ENCODE measurements at regions of chr19 and their contacts with region 1.

Region 1: GRCh38 chr19:45523642-45524256 is 16.5 kb downstream of the VASP start:
- DNase-seq: peak; percentile 54 to 85 (median 83)
- ATAC-seq: peak; percentile 100
- H3K4me3 ChIP-seq: no peak overlapping the region
- H3K4me3 Mint-ChIP-seq: no peak overlapping the region
- H3K27ac ChIP-seq: no peak overlapping the region
- H3K27ac Mint-ChIP-seq: peak overlapping the region in 8 of 9 donors; percentile 26 to 88 (median 65)
- H3K4me1 ChIP-seq: no peaks in the 10 kb centered on the region
- H3K4me1 Mint-ChIP-seq: peaks cover 11 to 24% (median 17%) of the 10 kb centered on the region in 7 donors
- H3K27me3 ChIP-seq: no peaks in the 10 kb centered on the region
- H3K27me3 Mint-ChIP-seq: no peaks in the 10 kb centered on the region

Region 2: GRCh38 chr19:45496349-45496953 is 27.3 kb before region 1 on chr19:
- CTCF ChIA-PET with region 1: interaction called, 3 read pairs
- POLR2A ChIA-PET with region 1: interaction called, 4 read pairs
- intact Hi-C with region 1: loop called in 1 of 2 experiments (anchors 1 kb)
- DNase-seq: peak in 7 of 9 donors; percentile 44 to 75 (median 55)
- ATAC-seq: peak; percentile 33
- H3K4me3 ChIP-seq: peak overlapping the region; percentile 65
- H3K4me3 Mint-ChIP-seq: peak overlapping the region; percentile 72 to 97 (median 77)
- H3K27ac ChIP-seq: no peak overlapping the region
- H3K27ac Mint-ChIP-seq: peak overlapping the region in 4 of 9 donors; percentile 12 to 87 (median 48)
- H3K4me1 ChIP-seq: peaks cover 28 to 38% of the 10 kb centered on the region in 2 donors
- H3K4me1 Mint-ChIP-seq: peaks cover 28 to 52% (median 48%) of the 10 kb centered on the region in 7 donors
- H3K27me3 ChIP-seq: no peaks in the 10 kb centered on the region
- H3K27me3 Mint-ChIP-seq: peaks cover 12 to 37% (median 19%) of the 10 kb centered on the region in 5 donors

Region 3: GRCh38 chr19:45506246-45506990 is 17.3 kb before region 1 on chr19:
- CTCF ChIA-PET with region 1: no interaction called
- POLR2A ChIA-PET with region 1: interaction called, 4 read pairs
- intact Hi-C with region 1: loop called (anchors 1 kb)
- DNase-seq: peak; percentile 95 to 99 (median 98)
- ATAC-seq: peak; percentile 88
- H3K4me3 ChIP-seq: peak overlapping the region; percentile 99
- H3K4me3 Mint-ChIP-seq: peak overlapping the region; percentile 91 to 96 (median 94)
- H3K27ac ChIP-seq: peak overlapping the region; percentile 87
- H3K27ac Mint-ChIP-seq: peak overlapping the region; percentile 91 to 98 (median 97)
- H3K4me1 ChIP-seq: peaks cover 14 to 20% of the 10 kb centered on the region in 2 donors
- H3K4me1 Mint-ChIP-seq: peaks cover 29 to 46% (median 34%) of the 10 kb centered on the region in 7 donors
- H3K27me3 ChIP-seq: no peaks in the 10 kb centered on the region
- H3K27me3 Mint-ChIP-seq: no peaks in the 10 kb centered on the region

Region 4: DNA sequence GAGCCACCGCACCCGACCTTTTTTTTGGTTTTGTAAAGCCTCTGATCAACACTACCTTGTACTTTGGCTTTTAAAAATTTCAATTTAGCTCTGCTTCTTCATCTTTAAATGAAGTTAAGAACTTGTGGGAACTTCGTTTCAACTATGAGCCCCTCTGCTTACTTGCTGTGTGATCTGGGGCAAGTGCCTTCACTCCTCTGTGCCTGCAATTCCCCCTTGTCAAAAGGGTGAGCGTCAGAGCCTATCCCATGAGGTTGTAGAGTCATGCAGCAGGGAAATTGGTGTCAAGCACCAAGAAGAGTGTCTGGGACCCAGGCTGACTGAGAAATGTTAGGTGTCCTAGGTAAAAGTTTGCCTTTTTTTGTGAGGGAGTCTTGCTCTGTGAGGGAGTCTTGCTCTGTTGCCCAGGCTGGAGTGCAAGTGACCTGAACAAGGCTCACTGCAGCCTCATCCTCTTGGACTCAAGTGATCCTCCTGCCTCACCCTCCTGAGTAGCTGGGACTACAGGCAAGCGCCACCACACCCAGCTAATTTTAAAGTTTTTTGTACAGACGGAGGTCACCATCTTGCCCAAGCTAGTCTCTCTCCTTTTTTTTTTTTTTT is 10.8 kb before region 1 on chr19:
- CTCF ChIA-PET with region 1: no interaction called
- POLR2A ChIA-PET with region 1: interaction called, 4 read pairs
- intact Hi-C with region 1: loop called in 1 of 2 experiments (anchors 1 kb)
- DNase-seq: no peak
- ATAC-seq: no peak
- H3K4me3 ChIP-seq: no peak overlapping the region
- H3K4me3 Mint-ChIP-seq: peak overlapping the region in 7 of 10 donors; percentile 17 to 62 (median 45)
- H3K27ac ChIP-seq: no peak overlapping the region
- H3K27ac Mint-ChIP-seq: peak overlapping the region; percentile 43 to 96 (median 71)
- H3K4me1 ChIP-seq: peaks cover 29 to 48% of the 10 kb centered on the region in 2 donors
- H3K4me1 Mint-ChIP-seq: peaks cover 45 to 75% (median 60%) of the 10 kb centered on the region in 7 donors
- H3K27me3 ChIP-seq: no peaks in the 10 kb centered on the region
- H3K27me3 Mint-ChIP-seq: no peaks in the 10 kb centered on the region

Region 5: DNA sequence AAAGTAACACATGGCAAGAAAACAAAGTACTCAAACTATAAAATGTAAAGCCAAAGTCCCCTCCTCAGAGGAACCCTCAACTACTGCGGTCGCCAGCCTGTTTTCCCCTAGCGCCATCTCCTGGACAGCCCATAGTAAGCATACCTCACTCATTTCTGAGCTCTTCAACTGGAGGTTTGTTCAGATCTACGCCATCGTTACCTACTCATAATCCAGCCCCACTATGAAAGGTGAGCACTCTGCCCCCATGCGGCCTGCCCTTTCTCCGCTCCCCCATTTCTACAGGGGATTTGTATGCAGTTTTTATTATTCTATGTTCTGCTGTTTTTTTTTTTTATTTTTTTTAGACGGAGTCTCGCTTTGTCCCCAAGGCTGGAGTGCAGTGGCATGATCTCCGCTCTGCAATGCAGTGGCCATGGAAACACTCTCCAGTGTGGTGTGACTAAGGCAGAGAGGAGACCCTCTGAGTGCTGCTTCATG is 34.7 kb after region 1 on chr19:
- CTCF ChIA-PET with region 1: interaction called, 7 read pairs
- POLR2A ChIA-PET with region 1: interaction called, 3 read pairs
- intact Hi-C with region 1: loop called (anchors 1 kb)
- DNase-seq: peak; percentile 37 to 85 (median 81)
- ATAC-seq: peak; percentile 99
- H3K4me3 ChIP-seq: no peak overlapping the region
- H3K4me3 Mint-ChIP-seq: peak overlapping the region in 3 of 10 donors; percentile 52 to 75 (median 59)
- H3K27ac ChIP-seq: peak overlapping the region; percentile 18
- H3K27ac Mint-ChIP-seq: peak overlapping the region in 8 of 9 donors; percentile 14 to 86 (median 66)
- H3K4me1 ChIP-seq: peaks cover 0 to 29% of the 10 kb centered on the region in 2 donors
- H3K4me1 Mint-ChIP-seq: peaks cover 20 to 48% (median 34%) of the 10 kb centered on the region in 7 donors
- H3K27me3 ChIP-seq: no peaks in the 10 kb centered on the region
- H3K27me3 Mint-ChIP-seq: no peaks in the 10 kb centered on the region

Region 6: GRCh38 chr19:45569619-45570421 is 46.1 kb after region 1 on chr19:
- CTCF ChIA-PET with region 1: interaction called, 5 read pairs
- POLR2A ChIA-PET with region 1: no interaction called
- intact Hi-C with region 1: loop called (anchors 1 kb)
- DNase-seq: peak in 8 of 9 donors; percentile 16 to 65 (median 45)
- ATAC-seq: peak; percentile 75
- H3K4me3 ChIP-seq: no peak overlapping the region
- H3K4me3 Mint-ChIP-seq: no peak overlapping the region
- H3K27ac ChIP-seq: no peak overlapping the region
- H3K27ac Mint-ChIP-seq: peak overlapping the region in 7 of 9 donors; percentile 18 to 89 (median 43)
- H3K4me1 ChIP-seq: peaks cover 0 to 1% of the 10 kb centered on the region in 2 donors
- H3K4me1 Mint-ChIP-seq: peaks cover 6 to 26% (median 10%) of the 10 kb centered on the region in 7 donors
- H3K27me3 ChIP-seq: no peaks in the 10 kb centered on the region
- H3K27me3 Mint-ChIP-seq: no peaks in the 10 kb centered on the region

Region 7: DNA sequence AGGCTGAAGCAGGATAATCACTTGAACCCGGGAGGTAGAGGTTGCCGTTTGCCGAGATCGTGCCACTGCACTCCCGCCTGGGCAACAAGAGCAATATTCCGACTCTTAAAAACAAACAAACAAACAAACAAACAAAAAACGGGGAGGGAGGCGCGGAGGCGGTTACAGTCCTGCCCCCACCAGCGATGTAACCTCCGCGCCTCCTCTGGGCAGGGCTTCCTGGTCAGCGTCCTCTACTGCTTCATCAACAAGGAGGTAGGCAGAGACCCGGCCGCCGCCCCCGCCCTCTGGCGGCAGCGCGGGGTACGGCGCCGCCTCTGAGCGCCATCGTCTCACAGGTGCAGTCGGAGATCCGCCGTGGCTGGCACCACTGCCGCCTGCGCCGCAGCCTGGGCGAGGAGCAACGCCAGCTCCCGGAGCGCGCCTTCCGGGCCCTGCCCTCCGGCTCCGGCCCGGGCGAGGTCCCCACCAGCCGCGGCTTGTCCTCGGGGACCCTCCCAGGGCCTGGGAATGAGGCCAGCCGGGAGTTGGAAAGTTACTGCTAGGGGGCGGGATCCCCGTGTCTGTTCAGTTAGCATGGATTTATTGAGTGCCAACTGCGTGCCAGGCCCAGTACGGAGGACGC is 157.8 kb after region 1 on chr19:
- CTCF ChIA-PET with region 1: no interaction called
- POLR2A ChIA-PET with region 1: no interaction called
- intact Hi-C with region 1: loop called (anchors 1 kb)
- DNase-seq: peak; percentile 76 to 94 (median 87)
- ATAC-seq: peak; percentile 92
- H3K4me3 ChIP-seq: peak overlapping the region; percentile 48
- H3K4me3 Mint-ChIP-seq: peak overlapping the region; percentile 74 to 88 (median 80)
- H3K27ac ChIP-seq: peak overlapping the region; percentile 37
- H3K27ac Mint-ChIP-seq: peak overlapping the region in 8 of 9 donors; percentile 43 to 87 (median 75)
- H3K4me1 ChIP-seq: peaks cover 13 to 16% of the 10 kb centered on the region in 2 donors
- H3K4me1 Mint-ChIP-seq: peaks cover 7 to 22% (median 20%) of the 10 kb centered on the region in 7 donors
- H3K27me3 ChIP-seq: no peaks in the 10 kb centered on the region
- H3K27me3 Mint-ChIP-seq: peaks cover 0 to 4% (median 0%) of the 10 kb centered on the region in 5 donors